ENCODE measurements at regions of chr15 and their contacts with region 1.

Region 1: GRCh38 chr15:37134699-37135131 is 34.4 kb upstream of the MEIS2 start:
- DNase-seq: no peak
- H3K4me3 ChIP-seq: no peak overlapping the region
- H3K27ac ChIP-seq: peak overlapping the region in 1 of 2 experiments; percentile 97; a peak in 2 of 4 replicates
- H3K4me1 ChIP-seq: peaks cover 5 to 44% of the 10 kb centered on the region in 2 experiments; a peak in 2 of 4 replicates
- H3K27me3 ChIP-seq: no peaks in the 10 kb centered on the region
- CTCF ChIP-seq: peak; percentile 83
- EP300 ChIP-seq: 0 out of 4 replicates have a peak, but pooled peaks of 1 of the 2 experiments have one; percentile 26
- RAD21 ChIP-seq: peak; percentile 57; the same call in 1 of the 2 replicates

Region 2: GRCh38 chr15:37112171-37112570 is 22.5 kb before region 1 on chr15:
- CTCF ChIA-PET with region 1: interaction called, 101 read pairs
- POLR2A ChIA-PET with region 1: interaction called, 8 read pairs
- DNase-seq: no peak
- H3K4me3 ChIP-seq: no peak overlapping the region
- H3K27ac ChIP-seq: peak overlapping the region; percentile 99
- H3K4me1 ChIP-seq: peaks cover 14 to 37% of the 10 kb centered on the region in 2 experiments; a peak in 2 of 4 replicates
- H3K27me3 ChIP-seq: no peaks in the 10 kb centered on the region
- CTCF ChIP-seq: no peak
- EP300 ChIP-seq: no peak
- RAD21 ChIP-seq: no peak

Region 3: GRCh38 chr15:37220949-37221670 is 86.4 kb after region 1 on chr15:
- CTCF ChIA-PET with region 1: interaction called, 15 read pairs
- POLR2A ChIA-PET with region 1: no interaction called
- DNase-seq: peak; percentile 18
- H3K4me3 ChIP-seq: peak overlapping the region; percentile 11 to 35; a peak in 2 of 4 replicates
- H3K27ac ChIP-seq: peak overlapping the region; percentile 36 to 100; a peak in 3 of 4 replicates
- H3K4me1 ChIP-seq: peaks cover 3 to 40% of the 10 kb centered on the region in 2 experiments; a peak in 2 of 4 replicates
- H3K27me3 ChIP-seq: no peaks in the 10 kb centered on the region
- CTCF ChIP-seq: no peak
- EP300 ChIP-seq: peak; percentile 19 to 97
- RAD21 ChIP-seq: peak; percentile 12; the same call in 1 of the 2 replicates

Region 4: DNA sequence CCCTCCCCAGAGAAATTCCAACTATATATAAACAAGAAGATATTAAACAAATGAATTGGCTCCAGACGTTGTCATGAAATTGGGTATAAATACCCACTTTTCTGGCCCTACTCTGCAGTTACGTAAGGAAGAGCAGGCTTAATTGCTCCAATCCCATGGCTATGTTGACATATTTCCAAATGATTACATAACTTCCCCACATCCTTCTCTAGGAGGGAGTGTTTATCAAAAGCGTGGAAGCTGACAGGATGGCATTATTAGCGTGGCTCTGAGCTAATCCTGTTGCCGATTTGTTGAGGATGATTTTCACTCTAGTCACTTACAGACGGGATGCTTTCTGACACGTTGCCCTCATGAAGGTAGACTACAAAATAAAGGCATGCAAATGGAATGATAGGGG is 452.3 kb after region 1 on chr15:
- CTCF ChIA-PET with region 1: no interaction called
- POLR2A ChIA-PET with region 1: no interaction called
- DNase-seq: no peak
- H3K4me3 ChIP-seq: no peak overlapping the region
- H3K27ac ChIP-seq: no peak overlapping the region
- H3K4me1 ChIP-seq: no peaks in the 10 kb centered on the region; a peak in 1 of 4 replicates
- H3K27me3 ChIP-seq: no peaks in the 10 kb centered on the region
- CTCF ChIP-seq: no peak
- EP300 ChIP-seq: no peak
- RAD21 ChIP-seq: no peak